K562 (cell line): ENCODE measurements at regions of chr7 and their contacts with region 1.

Region 1: DNA sequence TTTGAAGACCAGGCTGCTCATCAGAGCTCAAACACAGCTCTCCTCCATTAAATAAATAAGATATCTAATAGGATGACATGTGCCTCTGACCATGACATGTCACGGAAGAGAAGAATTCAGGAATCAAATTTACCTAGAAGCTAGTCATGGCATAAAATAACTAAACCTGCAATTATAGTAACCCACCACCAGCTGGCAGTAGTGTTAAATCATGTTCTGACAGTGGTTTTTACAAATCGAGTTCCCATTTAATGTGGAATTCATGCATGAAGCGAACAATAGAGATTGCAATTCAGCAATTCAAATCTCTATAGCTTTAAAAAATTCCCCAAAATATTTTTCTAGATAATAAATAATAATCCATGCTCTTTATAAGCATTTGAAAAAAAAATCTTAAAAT is 74.6 kb upstream of the IKZF1 start:
- DNase-seq: peak; percentile 34 to 62 (median 41)
- ATAC-seq: no peak
- H3K4me3 ChIP-seq: no peak overlapping the region
- H3K27ac ChIP-seq: no peak overlapping the region
- H3K4me1 ChIP-seq: peaks cover 9 to 16% of the 10 kb centered on the region in 2 experiments
- H3K27me3 ChIP-seq: no peaks in the 10 kb centered on the region
- CTCF ChIP-seq: peak; percentile 29 to 66 (median 65); a peak in 5 of 6 replicates
- EP300 ChIP-seq: no peak
- POLR2A ChIP-seq: no peak
- RAD21 ChIP-seq: peak; percentile 33 to 74; a peak in 3 of 4 replicates

Region 2: GRCh38 chr7:49624611-49625010 is 605.4 kb before region 1 on chr7:
- CTCF ChIA-PET with region 1: no interaction called
- POLR2A ChIA-PET with region 1: no interaction called
- in situ Hi-C with region 1: no loop called
- intact Hi-C with region 1: no loop called
- DNase-seq: no peak
- ATAC-seq: no peak
- H3K4me3 ChIP-seq: no peak overlapping the region
- H3K27ac ChIP-seq: no peak overlapping the region
- H3K4me1 ChIP-seq: no peaks in the 10 kb centered on the region
- H3K27me3 ChIP-seq: no peaks in the 10 kb centered on the region
- CTCF ChIP-seq: no peak
- EP300 ChIP-seq: no peak
- POLR2A ChIP-seq: no peak
- RAD21 ChIP-seq: no peak

Region 3: DNA sequence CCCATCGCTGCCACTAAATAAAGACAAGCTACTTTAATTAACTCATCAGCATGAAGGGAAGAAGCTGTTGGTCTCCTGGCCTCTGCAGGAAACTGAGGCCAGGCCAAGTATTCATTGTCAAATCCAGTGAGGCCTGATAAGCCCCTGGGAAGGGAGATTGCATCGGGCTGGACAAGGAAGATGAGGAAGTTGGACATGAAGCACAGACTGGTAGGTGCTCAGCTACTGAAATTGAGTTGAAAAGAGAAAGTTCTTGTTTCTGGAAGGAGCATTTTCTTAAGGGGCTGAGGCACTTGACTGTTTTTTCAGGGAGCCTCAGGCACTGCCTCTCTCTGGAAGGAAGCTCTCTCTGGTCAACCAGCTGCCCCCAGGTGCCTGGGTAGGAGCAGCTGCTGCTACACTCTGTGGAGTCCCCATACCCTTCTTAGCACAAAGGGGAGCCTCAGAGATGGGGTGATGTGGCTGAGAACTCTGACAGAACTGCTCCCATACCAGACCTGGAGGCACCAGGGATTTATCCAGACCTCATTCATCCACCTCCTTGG is 15.8 kb before region 1 on chr7:
- CTCF ChIA-PET with region 1: no interaction called
- POLR2A ChIA-PET with region 1: interaction called, 10 read pairs
- in situ Hi-C with region 1: no loop called
- intact Hi-C with region 1: no loop called
- DNase-seq: no peak
- ATAC-seq: no peak
- H3K4me3 ChIP-seq: no peak overlapping the region
- H3K27ac ChIP-seq: no peak overlapping the region
- H3K4me1 ChIP-seq: peaks cover 10 to 14% of the 10 kb centered on the region in 2 experiments
- H3K27me3 ChIP-seq: peaks cover 0 to 9% of the 10 kb centered on the region in 2 experiments; a peak in 1 of 5 replicates
- CTCF ChIP-seq: no peak
- EP300 ChIP-seq: no peak
- POLR2A ChIP-seq: no peak
- RAD21 ChIP-seq: no peak

Region 4: DNA sequence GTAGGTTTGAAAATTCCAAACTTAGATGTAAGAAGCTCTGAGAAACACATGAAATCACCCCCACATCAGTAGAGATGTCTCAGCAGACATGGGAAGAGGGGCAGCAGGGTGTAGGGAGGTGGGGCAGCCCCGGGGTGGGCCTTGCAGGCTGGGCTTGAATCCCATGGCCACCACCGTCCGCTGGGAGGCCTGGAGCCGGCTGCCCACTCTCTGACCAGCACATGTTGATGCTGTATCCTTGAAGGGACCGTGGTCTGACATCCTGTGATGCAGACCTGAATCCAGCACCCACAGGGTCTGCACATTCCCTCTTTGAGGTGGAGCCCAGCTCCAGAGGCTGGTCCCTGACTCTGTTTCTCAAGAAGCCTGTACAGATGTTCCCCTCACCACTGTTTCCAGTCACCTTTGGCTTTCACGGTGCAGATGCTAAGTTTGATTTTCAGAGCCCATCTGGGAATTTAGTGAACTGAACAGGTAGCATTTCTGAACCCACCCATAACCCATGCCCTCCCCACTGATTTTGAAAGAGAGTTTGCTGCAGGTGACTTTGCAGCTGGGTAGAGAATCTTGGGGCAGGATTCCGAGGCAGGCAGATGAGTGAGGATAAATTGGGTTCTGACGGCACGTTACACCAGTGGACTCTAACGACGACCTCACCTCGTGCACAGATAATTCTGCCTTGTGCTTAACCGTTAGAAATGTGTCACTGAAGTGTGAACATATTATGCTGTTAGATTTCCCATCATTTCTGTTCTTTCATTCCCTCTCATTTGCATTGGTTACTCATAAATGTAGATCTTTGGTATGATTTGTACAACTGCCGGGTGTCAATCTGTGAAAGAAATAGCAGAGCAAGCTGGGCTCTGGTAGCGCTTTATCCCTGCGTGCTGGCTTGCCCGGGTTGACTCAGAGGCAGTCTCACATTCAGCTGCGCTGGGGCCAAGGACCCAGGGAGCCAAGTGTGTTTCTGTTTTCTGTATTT is 120.3 kb after region 1 on chr7:
- CTCF ChIA-PET with region 1: no interaction called
- POLR2A ChIA-PET with region 1: no interaction called
- in situ Hi-C with region 1: no loop called
- intact Hi-C with region 1: no loop called
- DNase-seq: peak in 2 of 4 experiments; percentile 35 to 69
- ATAC-seq: peak; percentile 78
- H3K4me3 ChIP-seq: no peak overlapping the region
- H3K27ac ChIP-seq: peak overlapping the region; percentile 38; the same call in 1 of the 3 replicates
- H3K4me1 ChIP-seq: peaks cover 21 to 56% of the 10 kb centered on the region in 2 experiments
- H3K27me3 ChIP-seq: no peaks in the 10 kb centered on the region
- CTCF ChIP-seq: no peak
- EP300 ChIP-seq: 0 out of 2 replicates have a peak, but pooled peaks have one; percentile 7
- POLR2A ChIP-seq: no peak
- RAD21 ChIP-seq: no peak

Region 5: GRCh38 chr7:50369143-50370026 is 139.4 kb after region 1 on chr7:
- CTCF ChIA-PET with region 1: interaction called, 9 read pairs
- POLR2A ChIA-PET with region 1: no interaction called
- in situ Hi-C with region 1: no loop called
- intact Hi-C with region 1: loop called (anchors 5 kb)
- DNase-seq: peak; percentile 70 to 88 (median 71)
- ATAC-seq: peak; percentile 90
- H3K4me3 ChIP-seq: no peak overlapping the region
- H3K27ac ChIP-seq: no peak overlapping the region
- H3K4me1 ChIP-seq: peaks cover 0 to 2% of the 10 kb centered on the region in 2 experiments; a peak in 1 of 5 replicates
- H3K27me3 ChIP-seq: no peaks in the 10 kb centered on the region
- CTCF ChIP-seq: peak; percentile 89 to 95 (median 92)
- EP300 ChIP-seq: no peak
- POLR2A ChIP-seq: no peak
- RAD21 ChIP-seq: peak; percentile 96 to 98